GM12878 (cell line): ENCODE measurements at regions of chrX and their contacts with region 1.

Region 1: DNA sequence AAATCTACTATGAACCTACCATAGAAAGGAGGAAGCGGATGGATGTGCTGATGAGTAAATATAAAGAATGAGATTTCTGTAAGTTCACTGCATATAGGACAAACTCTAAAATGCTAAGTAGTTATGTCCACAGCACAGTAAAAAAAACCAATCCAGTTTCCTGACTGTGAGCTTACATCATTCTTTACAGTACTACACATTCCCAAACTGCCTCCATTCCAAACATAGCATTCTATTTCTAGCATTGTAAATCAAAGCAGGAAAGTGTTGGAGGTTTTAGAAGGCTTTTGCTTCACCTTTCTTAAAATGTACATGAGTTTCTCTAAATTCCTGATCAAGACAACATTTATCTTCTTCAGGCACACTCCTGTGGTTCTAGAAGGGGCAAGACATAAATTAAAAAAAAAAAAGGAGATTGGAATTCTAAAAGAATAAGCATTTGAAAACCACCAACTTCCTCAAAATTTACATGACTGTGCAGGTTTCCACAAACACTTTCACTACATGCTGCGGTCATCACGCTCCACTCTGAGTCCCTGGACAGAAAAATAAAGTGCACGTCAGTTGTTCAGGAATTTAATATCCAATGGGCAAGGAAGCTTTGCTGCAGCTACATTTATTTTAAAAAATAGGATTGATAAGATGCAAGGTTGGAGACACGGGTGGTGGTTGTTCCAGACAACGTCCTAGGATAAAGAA is 297.6 kb upstream of the STS start:
- DNase-seq: no peak
- ATAC-seq: no peak
- H3K4me3 ChIP-seq: no peak overlapping the region
- H3K27ac ChIP-seq: no peak overlapping the region
- H3K4me1 ChIP-seq: no peaks in the 10 kb centered on the region
- H3K27me3 ChIP-seq: no peaks in the 10 kb centered on the region
- CTCF ChIP-seq: no peak
- EP300 ChIP-seq: no peak
- POLR2A ChIP-seq: no peak
- RAD21 ChIP-seq: no peak

Region 2: GRCh38 chrX:6803607-6804006 is 46.3 kb before region 1 on chrX:
- CTCF ChIA-PET with region 1: no interaction called
- POLR2A ChIA-PET with region 1: no interaction called
- RAD21 ChIA-PET with region 1: no interaction called
- SMC1A ChIA-PET with region 1: no interaction called
- in situ Hi-C with region 1: no loop called
- intact Hi-C with region 1: no loop called
- DNase-seq: no peak
- ATAC-seq: no peak
- H3K4me3 ChIP-seq: no peak overlapping the region
- H3K27ac ChIP-seq: no peak overlapping the region
- H3K4me1 ChIP-seq: no peaks in the 10 kb centered on the region
- H3K27me3 ChIP-seq: no peaks in the 10 kb centered on the region
- CTCF ChIP-seq: no peak
- EP300 ChIP-seq: no peak
- POLR2A ChIP-seq: no peak
- RAD21 ChIP-seq: no peak

Region 3: DNA sequence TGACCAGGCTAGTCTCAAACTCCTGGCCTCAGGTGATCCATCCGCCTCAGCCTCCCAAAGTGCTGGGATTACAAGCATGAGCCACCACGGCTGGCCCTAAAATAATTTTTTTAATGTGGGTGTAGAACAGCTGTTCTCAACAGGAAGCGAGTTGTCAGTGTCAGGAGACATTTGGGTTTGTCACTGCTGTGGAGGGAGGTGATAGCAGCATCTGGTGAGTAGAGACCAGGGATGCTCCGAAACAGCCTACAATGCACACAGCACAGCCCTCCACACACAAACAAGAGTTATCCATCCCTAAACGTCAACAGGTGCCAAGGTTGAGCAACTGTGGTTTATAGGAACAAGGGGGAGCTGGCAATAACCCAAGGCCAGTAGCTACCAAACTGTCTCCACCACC is 54.3 kb after region 1 on chrX:
- CTCF ChIA-PET with region 1: interaction called, 3 read pairs
- POLR2A ChIA-PET with region 1: no interaction called
- RAD21 ChIA-PET with region 1: no interaction called
- SMC1A ChIA-PET with region 1: no interaction called
- in situ Hi-C with region 1: no loop called
- intact Hi-C with region 1: loop called (anchors 10 kb)
- DNase-seq: no peak
- ATAC-seq: no peak
- H3K4me3 ChIP-seq: no peak overlapping the region
- H3K27ac ChIP-seq: no peak overlapping the region
- H3K4me1 ChIP-seq: no peaks in the 10 kb centered on the region
- H3K27me3 ChIP-seq: no peaks in the 10 kb centered on the region
- CTCF ChIP-seq: no peak
- EP300 ChIP-seq: no peak
- POLR2A ChIP-seq: no peak
- RAD21 ChIP-seq: no peak

Region 4: DNA sequence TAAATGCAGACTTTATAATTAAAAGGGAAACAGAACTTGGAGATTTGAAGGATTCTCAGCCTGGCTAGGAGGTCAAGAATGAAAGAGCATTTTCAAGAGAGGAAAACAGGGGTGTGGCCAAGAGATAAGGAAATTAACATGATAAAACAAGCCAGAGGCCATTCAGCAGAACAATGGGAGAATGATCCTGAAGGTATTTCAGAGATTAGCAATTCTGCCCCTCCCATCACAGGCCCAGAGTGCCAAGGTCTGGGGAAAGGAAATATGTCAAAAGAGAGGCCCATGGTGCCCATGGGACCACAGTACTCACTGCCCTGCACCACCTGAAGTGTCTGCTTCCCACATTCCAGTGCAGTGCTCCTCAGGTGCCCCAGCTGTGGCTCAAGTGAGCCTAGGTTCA is 109.1 kb after region 1 on chrX:
- CTCF ChIA-PET with region 1: no interaction called
- POLR2A ChIA-PET with region 1: no interaction called
- RAD21 ChIA-PET with region 1: no interaction called
- SMC1A ChIA-PET with region 1: no interaction called
- in situ Hi-C with region 1: no loop called
- intact Hi-C with region 1: no loop called
- DNase-seq: no peak
- ATAC-seq: no peak
- H3K4me3 ChIP-seq: no peak overlapping the region
- H3K27ac ChIP-seq: no peak overlapping the region
- H3K4me1 ChIP-seq: no peaks in the 10 kb centered on the region
- H3K27me3 ChIP-seq: no peaks in the 10 kb centered on the region
- CTCF ChIP-seq: no peak
- EP300 ChIP-seq: no peak
- POLR2A ChIP-seq: no peak
- RAD21 ChIP-seq: no peak

Region 5: DNA sequence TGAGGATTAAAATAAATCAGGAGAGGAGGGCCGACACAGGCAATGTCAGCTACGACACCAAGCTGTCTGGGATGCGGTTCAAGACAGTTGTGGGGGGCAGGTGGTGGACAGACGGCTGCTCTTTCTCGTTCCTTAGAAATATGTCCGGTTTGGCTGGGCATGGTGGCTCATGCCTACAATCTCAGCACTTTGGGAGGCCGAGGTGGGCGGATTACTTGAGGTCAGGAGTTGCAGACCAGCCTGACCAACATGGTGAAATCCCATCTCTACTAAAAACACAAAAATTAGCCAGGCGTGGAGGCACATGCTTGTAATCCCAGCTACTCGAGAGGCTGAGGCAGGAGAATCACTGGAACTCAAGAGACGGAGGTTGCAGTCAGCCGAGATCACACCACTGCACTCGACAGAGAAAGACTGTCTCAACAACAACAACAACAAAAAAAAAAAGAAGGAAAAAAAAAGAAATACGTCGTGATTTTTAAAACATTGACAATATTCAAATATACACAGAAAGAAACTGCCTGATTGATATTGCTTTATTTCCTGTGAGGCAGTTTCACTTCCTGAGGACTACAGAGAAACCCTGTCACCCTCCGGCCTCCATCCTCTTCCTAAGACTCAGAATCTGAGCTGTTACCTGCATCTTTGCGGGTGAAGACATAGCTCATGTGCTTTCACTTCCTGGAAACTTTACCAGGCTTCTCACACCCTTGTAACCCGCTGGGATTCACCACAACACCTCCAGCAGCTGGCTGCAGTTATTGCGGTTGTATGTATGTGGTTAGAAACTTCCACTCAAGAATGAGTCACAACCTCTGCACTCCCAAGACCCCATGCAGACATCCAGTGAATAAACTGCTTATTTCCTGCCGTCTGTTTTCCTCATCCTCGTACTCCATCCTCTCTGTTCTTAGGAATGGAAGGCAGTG is 233.9 kb after region 1 on chrX:
- CTCF ChIA-PET with region 1: no interaction called
- POLR2A ChIA-PET with region 1: no interaction called
- RAD21 ChIA-PET with region 1: no interaction called
- SMC1A ChIA-PET with region 1: no interaction called
- in situ Hi-C with region 1: no loop called
- intact Hi-C with region 1: loop called (anchors 10 kb)
- DNase-seq: peak; percentile 84
- ATAC-seq: peak; percentile 85
- H3K4me3 ChIP-seq: no peak overlapping the region; the same call in 1 of the 2 replicates
- H3K27ac ChIP-seq: peak overlapping the region; percentile 46
- H3K4me1 ChIP-seq: peaks cover 45% of the 10 kb centered on the region
- H3K27me3 ChIP-seq: no peaks in the 10 kb centered on the region
- CTCF ChIP-seq: no peak
- EP300 ChIP-seq: peak; percentile 94
- POLR2A ChIP-seq: no peak
- RAD21 ChIP-seq: no peak